ENCODE measurements at regions of chrX and their contacts with region 1.

Region 1: DNA sequence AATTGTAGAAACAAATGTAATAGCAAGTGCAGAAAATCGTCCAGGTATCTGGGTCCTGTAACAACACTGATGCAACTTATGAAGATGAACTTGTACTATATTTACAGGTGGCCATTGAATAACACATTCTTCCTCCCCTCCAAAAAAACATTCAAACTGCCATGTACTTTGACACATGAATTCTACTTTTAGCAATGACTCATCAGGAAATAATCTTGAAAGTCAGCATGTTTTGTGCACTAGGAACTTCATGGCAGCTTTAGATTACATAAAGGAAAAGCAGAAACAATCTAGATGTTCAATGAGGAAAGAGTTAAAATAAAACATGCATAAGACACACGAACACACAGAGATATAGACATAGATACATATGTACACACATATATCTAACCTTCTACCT is 2.5 kb downstream of the PABPC1L2A start:
- DNase-seq: no peak
- H3K4me3 Mint-ChIP-seq: no peak overlapping the region
- H3K27ac Mint-ChIP-seq: no peak overlapping the region
- H3K4me1 Mint-ChIP-seq: no peaks in the 10 kb centered on the region
- H3K27me3 Mint-ChIP-seq: peaks cover 7% of the 10 kb centered on the region

Region 2: GRCh38 chrX:73262992-73263391 is 186.2 kb after region 1 on chrX:
- CTCF ChIA-PET with region 1: no interaction called
- intact Hi-C with region 1: loop called (anchors 10 kb)
- DNase-seq: no peak
- H3K4me3 Mint-ChIP-seq: no peak overlapping the region
- H3K27ac Mint-ChIP-seq: no peak overlapping the region
- H3K4me1 Mint-ChIP-seq: no peaks in the 10 kb centered on the region
- H3K27me3 Mint-ChIP-seq: no peaks in the 10 kb centered on the region